PC-3 (cell line): ENCODE measurements at regions of chr10 and their contacts with region 1.

Region 1: GRCh38 chr10:4353964-4354363 is 472.0 kb upstream of the AKR1E2 start:
- DNase-seq: peak; percentile 81
- ATAC-seq: peak; percentile 75
- H3K4me3 ChIP-seq: no peak overlapping the region; the same call in 1 of the 2 replicates
- H3K27ac ChIP-seq: peak overlapping the region; percentile 92
- H3K4me1 ChIP-seq: peaks cover 33% of the 10 kb centered on the region
- H3K27me3 ChIP-seq: no peaks in the 10 kb centered on the region
- CTCF ChIP-seq: no peak

Region 2: DNA sequence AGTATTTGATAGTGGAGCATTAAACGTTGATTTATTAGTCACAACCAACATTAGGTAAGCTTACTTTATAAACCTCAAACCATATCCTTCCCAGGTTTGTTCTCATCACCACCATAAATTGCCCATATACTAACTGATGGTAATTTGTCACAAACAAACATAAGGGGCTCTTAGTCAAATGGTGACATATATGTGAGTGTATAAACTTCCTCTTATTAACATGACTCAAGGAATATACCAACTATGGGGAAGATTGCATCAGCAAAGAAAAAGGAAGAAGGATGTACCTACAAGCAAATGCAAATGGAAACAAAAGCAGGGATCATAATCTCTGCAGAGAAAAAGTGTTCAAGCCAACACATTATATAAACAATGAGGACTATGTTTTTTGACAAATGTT is 53.8 kb after region 1 on chr10:
- CTCF ChIA-PET with region 1: no interaction called
- POLR2A ChIA-PET with region 1: no interaction called
- intact Hi-C with region 1: loop called (anchors 1 kb)
- DNase-seq: peak; percentile 78
- ATAC-seq: peak; percentile 94
- H3K4me3 ChIP-seq: no peak overlapping the region
- H3K27ac ChIP-seq: peak overlapping the region; percentile 94
- H3K4me1 ChIP-seq: peaks cover 21% of the 10 kb centered on the region
- H3K27me3 ChIP-seq: no peaks in the 10 kb centered on the region
- CTCF ChIP-seq: no peak

Region 3: GRCh38 chr10:4541292-4541691 is 187.3 kb after region 1 on chr10:
- CTCF ChIA-PET with region 1: no interaction called
- POLR2A ChIA-PET with region 1: interaction called, 9 read pairs
- intact Hi-C with region 1: loop called (anchors 2 kb)
- DNase-seq: peak; percentile 88
- ATAC-seq: peak; percentile 100
- H3K4me3 ChIP-seq: no peak overlapping the region
- H3K27ac ChIP-seq: peak overlapping the region; percentile 97
- H3K4me1 ChIP-seq: peaks cover 17% of the 10 kb centered on the region
- H3K27me3 ChIP-seq: no peaks in the 10 kb centered on the region
- CTCF ChIP-seq: peak; percentile 37; the same call in 1 of the 2 replicates

Region 4: DNA sequence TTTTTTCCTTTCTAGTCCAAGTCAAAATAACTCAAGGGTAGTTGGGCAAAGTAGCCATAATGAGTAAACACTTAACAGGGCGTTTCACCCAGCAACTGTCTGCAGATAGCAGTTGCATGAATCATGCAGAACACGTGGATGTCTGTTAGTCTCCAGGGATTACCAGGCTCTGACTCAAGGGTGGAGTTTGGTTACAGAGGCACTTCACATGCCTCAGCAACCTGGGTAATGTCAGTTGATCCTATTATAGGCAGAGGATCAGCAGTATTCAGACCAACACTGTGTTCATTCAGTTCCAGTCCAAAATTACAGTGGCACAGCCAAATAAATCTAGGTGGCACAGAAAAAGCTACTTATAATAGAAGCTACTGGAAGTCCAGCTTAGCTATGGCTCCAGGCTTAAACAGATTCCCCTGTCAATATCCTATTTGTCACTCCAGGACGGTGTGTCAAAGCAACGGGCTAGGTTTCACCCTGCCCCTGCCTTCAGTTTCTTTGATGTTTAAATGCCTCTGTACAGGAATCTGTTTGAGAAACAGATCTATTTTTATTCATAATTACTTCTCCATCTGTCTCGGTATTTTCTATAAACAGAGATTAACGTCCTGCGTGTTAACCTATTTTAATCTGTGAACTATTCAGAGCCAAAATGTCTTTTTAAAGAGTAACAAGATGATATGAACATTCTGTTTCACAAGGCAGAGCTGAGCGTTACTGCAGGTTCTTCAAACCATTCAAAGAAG is 309.4 kb after region 1 on chr10:
- CTCF ChIA-PET with region 1: no interaction called
- POLR2A ChIA-PET with region 1: no interaction called
- intact Hi-C with region 1: loop called (anchors 2 kb)
- DNase-seq: peak; percentile 93
- ATAC-seq: peak; percentile 93
- H3K4me3 ChIP-seq: no peak overlapping the region
- H3K27ac ChIP-seq: peak overlapping the region; percentile 98
- H3K4me1 ChIP-seq: peaks cover 45% of the 10 kb centered on the region
- H3K27me3 ChIP-seq: no peaks in the 10 kb centered on the region
- CTCF ChIP-seq: no peak